Activated CD4-positive, alpha-beta memory T cell treated with anti-CD3 and anti-CD28 coated beads for 36 hours (primary cell): ENCODE measurements at regions of chr11 and their contacts with region 1.

Region 1: DNA sequence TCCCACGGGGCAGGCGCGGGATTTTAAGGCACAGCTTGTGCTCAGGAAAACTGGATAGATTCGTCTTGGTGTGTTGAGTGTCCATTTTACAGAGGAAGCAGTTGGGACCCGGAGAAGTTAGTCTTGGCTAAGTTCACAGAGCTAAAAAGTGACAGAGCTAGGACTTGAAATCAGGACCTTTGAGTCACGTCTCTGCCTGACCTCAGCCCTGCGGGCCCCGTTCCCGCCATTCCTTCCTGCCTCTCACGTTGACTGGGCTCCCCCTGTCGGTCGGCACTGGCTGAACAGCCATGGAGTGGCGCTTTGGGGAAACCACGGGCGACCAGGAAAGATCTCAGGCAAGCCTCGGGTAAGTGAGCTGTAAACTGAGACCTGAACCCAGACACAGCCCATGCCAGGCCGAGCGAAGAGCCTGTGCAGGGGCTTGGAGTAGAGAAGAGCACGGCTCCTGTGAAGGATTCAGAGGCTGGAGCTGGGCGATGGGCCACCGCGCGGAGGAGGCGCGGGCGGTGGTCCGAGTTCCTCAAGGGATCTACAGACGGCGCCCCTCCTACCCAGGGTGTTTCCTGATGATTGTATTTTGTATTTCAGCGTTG is 54.1 kb downstream of the WNT11 start:
- DNase-seq: peak; percentile 94
- H3K4me3 Mint-ChIP-seq: peak overlapping the region; percentile 51
- H3K27ac Mint-ChIP-seq: no peak overlapping the region
- H3K4me1 Mint-ChIP-seq: peaks cover 18% of the 10 kb centered on the region
- H3K27me3 Mint-ChIP-seq: peaks cover 3% of the 10 kb centered on the region

Region 2: GRCh38 chr11:75802913-75803820 is 349.0 kb before region 1 on chr11:
- CTCF ChIA-PET with region 1: interaction called, 34 read pairs
- POLR2A ChIA-PET with region 1: no interaction called
- intact Hi-C with region 1: loop called (anchors 1 kb)
- DNase-seq: peak; percentile 79
- H3K4me3 Mint-ChIP-seq: no peak overlapping the region
- H3K27ac Mint-ChIP-seq: no peak overlapping the region
- H3K4me1 Mint-ChIP-seq: peaks cover 15% of the 10 kb centered on the region
- H3K27me3 Mint-ChIP-seq: no peaks in the 10 kb centered on the region

Region 3: GRCh38 chr11:75867775-75868374 is 284.3 kb before region 1 on chr11:
- CTCF ChIA-PET with region 1: interaction called, 18 read pairs
- POLR2A ChIA-PET with region 1: no interaction called
- intact Hi-C with region 1: no loop called
- DNase-seq: peak; percentile 22
- H3K4me3 Mint-ChIP-seq: no peak overlapping the region
- H3K27ac Mint-ChIP-seq: no peak overlapping the region
- H3K4me1 Mint-ChIP-seq: peaks cover 4% of the 10 kb centered on the region
- H3K27me3 Mint-ChIP-seq: no peaks in the 10 kb centered on the region

Region 4: GRCh38 chr11:75907906-75908527 is 244.2 kb before region 1 on chr11:
- CTCF ChIA-PET with region 1: interaction called, 19 read pairs
- POLR2A ChIA-PET with region 1: no interaction called
- intact Hi-C with region 1: no loop called
- DNase-seq: no peak
- H3K4me3 Mint-ChIP-seq: no peak overlapping the region
- H3K27ac Mint-ChIP-seq: no peak overlapping the region
- H3K4me1 Mint-ChIP-seq: peaks cover 28% of the 10 kb centered on the region
- H3K27me3 Mint-ChIP-seq: no peaks in the 10 kb centered on the region

Region 5: GRCh38 chr11:76094740-76095139 is 57.4 kb before region 1 on chr11:
- CTCF ChIA-PET with region 1: no interaction called
- POLR2A ChIA-PET with region 1: no interaction called
- intact Hi-C with region 1: no loop called
- DNase-seq: no peak
- H3K4me3 Mint-ChIP-seq: no peak overlapping the region
- H3K27ac Mint-ChIP-seq: no peak overlapping the region
- H3K4me1 Mint-ChIP-seq: no peaks in the 10 kb centered on the region
- H3K27me3 Mint-ChIP-seq: no peaks in the 10 kb centered on the region

Region 6: GRCh38 chr11:76140912-76141574 is 11.1 kb before region 1 on chr11:
- CTCF ChIA-PET with region 1: interaction called, 33 read pairs
- POLR2A ChIA-PET with region 1: no interaction called
- intact Hi-C with region 1: no loop called
- DNase-seq: no peak
- H3K4me3 Mint-ChIP-seq: no peak overlapping the region
- H3K27ac Mint-ChIP-seq: no peak overlapping the region
- H3K4me1 Mint-ChIP-seq: no peaks in the 10 kb centered on the region
- H3K27me3 Mint-ChIP-seq: no peaks in the 10 kb centered on the region

Region 7: DNA sequence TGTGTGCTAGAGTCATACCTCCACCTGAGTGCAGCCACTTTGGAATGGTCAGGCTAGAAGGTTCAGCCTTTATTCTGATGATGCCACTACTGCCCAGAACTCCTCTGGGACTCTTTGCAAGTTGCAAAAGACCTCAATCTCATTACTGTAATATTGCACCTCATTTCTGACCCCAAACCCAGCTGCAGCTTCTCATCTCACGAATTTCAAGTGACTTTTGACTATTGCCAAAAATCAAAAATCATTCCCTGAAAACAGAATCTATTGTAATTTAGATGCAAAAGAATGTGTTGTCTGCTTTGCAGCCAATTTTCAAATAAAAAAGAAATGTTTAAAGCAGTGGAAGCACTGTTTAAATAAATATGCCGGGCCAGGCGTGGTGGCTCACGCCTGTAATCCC is 254.2 kb after region 1 on chr11:
- CTCF ChIA-PET with region 1: no interaction called
- POLR2A ChIA-PET with region 1: no interaction called
- intact Hi-C with region 1: no loop called
- DNase-seq: no peak
- H3K4me3 Mint-ChIP-seq: no peak overlapping the region
- H3K27ac Mint-ChIP-seq: no peak overlapping the region
- H3K4me1 Mint-ChIP-seq: no peaks in the 10 kb centered on the region
- H3K27me3 Mint-ChIP-seq: no peaks in the 10 kb centered on the region